ENCODE measurements at regions of chr12 and their contacts with region 1.

Region 1: DNA sequence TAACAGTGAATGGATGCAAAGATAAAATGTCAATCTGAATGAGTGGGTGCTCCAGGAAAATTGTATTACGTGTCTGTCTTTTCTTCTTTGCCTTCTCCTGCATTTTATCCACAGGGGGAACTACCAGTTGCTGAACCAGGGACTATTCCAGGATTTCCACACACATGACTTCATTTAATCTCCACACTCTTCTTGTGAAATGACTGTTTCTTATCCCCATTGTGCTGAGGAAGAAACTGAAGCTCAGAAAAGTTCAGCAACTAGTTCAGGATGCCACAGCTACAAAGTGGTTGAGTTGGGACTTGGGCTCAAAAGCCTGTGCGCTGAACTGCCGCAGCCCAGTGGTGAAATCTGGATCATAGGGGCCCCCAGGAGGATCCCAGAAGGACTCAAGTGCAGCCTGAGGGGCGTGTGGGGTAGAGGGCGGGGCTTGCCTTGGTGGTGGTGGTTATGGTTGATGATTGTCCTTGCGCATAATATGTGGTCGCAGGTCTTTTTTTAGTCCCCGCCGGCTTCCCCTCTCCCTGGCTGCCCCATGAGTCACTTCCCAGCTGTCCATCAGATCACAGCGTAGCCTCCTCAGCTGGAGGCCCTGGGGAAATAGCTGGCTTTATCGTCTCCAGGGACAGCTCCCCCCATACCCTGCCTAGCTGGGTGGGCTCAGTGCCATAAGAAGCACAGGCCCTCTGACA is 235.2 kb upstream of the CRY1 start:
- DNase-seq: peak; percentile 45
- H3K4me3 ChIP-seq: no peak overlapping the region
- H3K27ac ChIP-seq: no peak overlapping the region
- H3K4me1 ChIP-seq: peaks cover 9% of the 10 kb centered on the region
- H3K27me3 ChIP-seq: peaks cover 8 to 10% of the 10 kb centered on the region in 2 experiments
- CTCF ChIP-seq: no peak
- POLR2A ChIP-seq: no peak

Region 2: DNA sequence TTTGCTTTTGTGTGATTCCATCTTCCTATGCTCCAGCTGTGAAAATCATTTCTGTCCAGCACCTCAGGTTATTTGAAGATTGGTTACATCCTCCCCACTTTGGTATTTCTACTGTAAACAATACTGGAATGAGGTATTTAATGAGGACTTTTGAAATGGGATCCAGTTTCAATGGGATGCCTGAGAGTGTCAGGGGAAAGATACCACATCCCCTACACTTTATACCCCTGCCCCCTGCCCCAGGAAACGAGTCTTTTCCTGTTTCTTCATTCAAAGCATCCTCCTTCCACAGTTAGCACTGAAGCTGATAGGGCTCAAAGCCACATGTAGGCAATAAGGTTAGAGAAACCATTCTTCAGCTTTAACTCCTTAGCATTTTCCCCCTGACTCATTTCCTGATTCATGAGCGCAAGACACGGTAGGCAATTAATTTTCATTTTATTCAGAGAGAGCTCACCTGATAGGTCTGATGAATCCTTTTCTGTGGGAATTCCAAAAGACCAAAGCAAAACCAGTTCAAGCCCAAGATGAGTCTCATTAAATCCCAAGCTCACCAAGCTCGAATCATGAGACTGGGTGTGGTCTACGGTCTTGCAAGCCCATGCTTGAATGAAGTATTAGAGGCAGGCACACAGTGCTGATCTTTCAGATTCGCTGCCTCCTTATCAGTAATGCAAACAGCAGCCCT is 91.6 kb before region 1 on chr12:
- CTCF ChIA-PET with region 1: no interaction called
- POLR2A ChIA-PET with region 1: no interaction called
- dilution Hi-C with region 1: no loop called
- intact Hi-C with region 1: no loop called
- DNase-seq: peak; percentile 37
- H3K4me3 ChIP-seq: no peak overlapping the region
- H3K27ac ChIP-seq: no peak overlapping the region
- H3K4me1 ChIP-seq: peaks cover 12% of the 10 kb centered on the region
- H3K27me3 ChIP-seq: peaks cover 3% of the 10 kb centered on the region in 2 experiments
- CTCF ChIP-seq: no peak
- POLR2A ChIP-seq: no peak

Region 3: DNA sequence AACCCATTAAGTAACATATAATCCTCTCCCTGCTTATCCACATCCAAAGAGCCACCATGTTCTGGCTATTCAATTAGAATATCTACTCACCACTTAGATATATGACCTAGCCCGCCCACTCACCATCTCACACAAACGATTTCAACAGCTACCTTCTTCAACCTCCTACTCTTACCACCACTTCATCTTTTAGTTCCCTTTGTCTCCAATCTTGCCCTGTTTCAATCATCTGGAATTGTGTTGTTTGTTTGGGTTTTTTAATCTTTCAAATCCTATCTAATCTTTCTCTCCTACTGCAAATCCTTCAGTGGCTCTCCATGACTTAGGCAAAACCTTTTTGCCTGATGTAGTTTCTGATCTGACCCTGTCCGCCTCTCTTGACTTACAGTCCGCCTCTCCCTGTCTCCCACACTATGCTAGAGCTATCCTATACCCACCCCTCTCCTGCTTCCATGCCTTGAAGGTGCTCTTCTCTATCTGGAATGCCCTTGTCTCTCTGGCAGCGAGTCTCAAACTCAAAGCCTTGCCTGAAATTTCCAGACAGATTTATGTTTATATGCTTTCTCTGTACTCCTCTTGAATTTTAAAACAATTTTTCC is 74.2 kb before region 1 on chr12:
- CTCF ChIA-PET with region 1: no interaction called
- POLR2A ChIA-PET with region 1: no interaction called
- dilution Hi-C with region 1: no loop called
- intact Hi-C with region 1: no loop called
- DNase-seq: no peak
- H3K4me3 ChIP-seq: no peak overlapping the region
- H3K27ac ChIP-seq: no peak overlapping the region
- H3K4me1 ChIP-seq: no peaks in the 10 kb centered on the region
- H3K27me3 ChIP-seq: peaks cover 0 to 3% of the 10 kb centered on the region in 2 experiments
- CTCF ChIP-seq: no peak
- POLR2A ChIP-seq: no peak

Region 4: GRCh38 chr12:107515446-107515958 is 186.9 kb after region 1 on chr12:
- CTCF ChIA-PET with region 1: no interaction called
- POLR2A ChIA-PET with region 1: no interaction called
- dilution Hi-C with region 1: no loop called
- intact Hi-C with region 1: loop called (anchors 5 kb)
- DNase-seq: peak; percentile 73
- H3K4me3 ChIP-seq: no peak overlapping the region
- H3K27ac ChIP-seq: peak overlapping the region; percentile 54
- H3K4me1 ChIP-seq: peaks cover 15% of the 10 kb centered on the region
- H3K27me3 ChIP-seq: no peaks in the 10 kb centered on the region
- CTCF ChIP-seq: no peak
- POLR2A ChIP-seq: no peak

Measured in endothelial cell of umbilical vein (primary cell).